Activated CD4-positive, alpha-beta memory T cell treated with anti-CD3 and anti-CD28 coated beads for 36 hours (primary cell): ENCODE measurements at regions of chr1 and their contacts with region 1.

Region 1: DNA sequence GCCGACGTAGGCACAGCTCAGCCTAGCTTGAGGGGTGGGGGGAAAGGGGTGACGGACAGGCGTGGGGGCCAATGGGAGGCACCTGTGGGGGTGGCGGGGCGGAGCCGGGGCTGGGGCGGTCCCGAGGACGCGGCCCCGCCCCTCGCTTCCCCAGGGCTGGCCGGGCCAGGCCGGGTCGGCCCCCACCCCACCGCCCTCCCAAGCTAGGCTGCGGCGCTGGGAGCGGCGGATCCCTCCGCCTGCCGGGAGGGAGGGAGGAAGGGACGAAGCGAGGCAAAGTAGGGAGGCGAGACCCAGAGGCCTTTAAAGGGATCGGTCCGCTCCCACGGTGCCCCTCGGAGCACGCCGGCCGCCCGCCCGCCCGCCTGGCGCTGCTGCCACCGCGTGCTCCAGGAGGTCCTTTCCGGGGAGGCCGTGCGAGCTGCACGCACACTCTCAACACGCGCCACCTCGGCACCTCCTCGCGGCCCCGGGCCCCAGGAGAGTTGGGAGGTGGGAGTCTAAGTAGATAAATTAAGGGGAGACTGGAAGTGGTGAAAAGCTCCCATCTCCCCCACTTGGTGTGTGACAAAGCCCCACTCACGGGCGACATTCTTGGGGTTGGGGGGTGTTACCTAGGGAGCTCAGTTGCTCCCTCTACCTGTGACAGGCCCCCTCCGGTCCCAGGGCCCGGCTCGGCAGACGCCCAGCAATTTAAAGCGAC is 373 bp upstream of the MEF2D start:
- DNase-seq: peak; percentile 95
- H3K4me3 Mint-ChIP-seq: peak overlapping the region; percentile 92
- H3K27ac Mint-ChIP-seq: peak overlapping the region; percentile 91
- H3K4me1 Mint-ChIP-seq: peaks cover 74% of the 10 kb centered on the region
- H3K27me3 Mint-ChIP-seq: no peaks in the 10 kb centered on the region

Region 2: DNA sequence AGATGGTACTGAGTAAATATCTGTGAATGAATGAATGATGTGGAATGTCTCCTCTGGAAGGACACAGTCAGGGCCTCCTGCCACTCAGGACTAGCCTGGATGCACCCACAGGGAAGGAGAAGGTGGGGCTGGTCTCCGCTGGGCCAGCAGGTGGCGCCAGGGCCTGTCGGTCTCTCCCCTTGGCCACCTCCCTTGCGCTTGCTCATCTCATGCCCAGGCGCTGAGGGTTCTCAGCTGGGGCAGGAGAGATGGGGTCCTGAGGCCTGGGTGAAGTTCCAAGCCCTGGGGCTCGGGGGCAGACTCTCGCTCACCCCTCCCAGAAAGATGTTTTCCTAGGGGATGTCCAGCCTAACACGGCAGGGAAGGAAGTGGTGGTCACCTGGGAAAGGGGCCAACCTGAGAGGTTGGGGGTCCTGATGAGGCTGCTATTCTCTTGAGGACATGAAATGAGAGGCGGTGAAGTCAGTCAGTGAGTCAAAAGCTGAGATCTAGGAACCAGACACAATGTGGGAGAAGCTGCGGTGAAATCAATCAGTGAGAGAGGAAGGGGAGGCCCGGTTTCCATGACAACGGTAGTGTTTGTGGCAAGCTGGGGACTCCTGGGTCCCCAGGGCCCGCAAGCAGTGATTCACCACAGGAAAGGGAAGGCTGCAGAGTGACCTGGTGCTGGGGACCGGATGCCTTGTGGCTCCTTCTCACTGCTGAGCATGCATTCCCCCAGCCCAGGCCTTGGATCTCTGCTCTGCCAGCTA is 404.1 kb before region 1 on chr1:
- CTCF ChIA-PET with region 1: no interaction called
- POLR2A ChIA-PET with region 1: no interaction called
- intact Hi-C with region 1: loop called (anchors 10 kb)
- DNase-seq: peak; percentile 97
- H3K4me3 Mint-ChIP-seq: peak overlapping the region; percentile 64
- H3K27ac Mint-ChIP-seq: peak overlapping the region; percentile 96
- H3K4me1 Mint-ChIP-seq: peaks cover 56% of the 10 kb centered on the region
- H3K27me3 Mint-ChIP-seq: peaks cover 11% of the 10 kb centered on the region

Region 3: DNA sequence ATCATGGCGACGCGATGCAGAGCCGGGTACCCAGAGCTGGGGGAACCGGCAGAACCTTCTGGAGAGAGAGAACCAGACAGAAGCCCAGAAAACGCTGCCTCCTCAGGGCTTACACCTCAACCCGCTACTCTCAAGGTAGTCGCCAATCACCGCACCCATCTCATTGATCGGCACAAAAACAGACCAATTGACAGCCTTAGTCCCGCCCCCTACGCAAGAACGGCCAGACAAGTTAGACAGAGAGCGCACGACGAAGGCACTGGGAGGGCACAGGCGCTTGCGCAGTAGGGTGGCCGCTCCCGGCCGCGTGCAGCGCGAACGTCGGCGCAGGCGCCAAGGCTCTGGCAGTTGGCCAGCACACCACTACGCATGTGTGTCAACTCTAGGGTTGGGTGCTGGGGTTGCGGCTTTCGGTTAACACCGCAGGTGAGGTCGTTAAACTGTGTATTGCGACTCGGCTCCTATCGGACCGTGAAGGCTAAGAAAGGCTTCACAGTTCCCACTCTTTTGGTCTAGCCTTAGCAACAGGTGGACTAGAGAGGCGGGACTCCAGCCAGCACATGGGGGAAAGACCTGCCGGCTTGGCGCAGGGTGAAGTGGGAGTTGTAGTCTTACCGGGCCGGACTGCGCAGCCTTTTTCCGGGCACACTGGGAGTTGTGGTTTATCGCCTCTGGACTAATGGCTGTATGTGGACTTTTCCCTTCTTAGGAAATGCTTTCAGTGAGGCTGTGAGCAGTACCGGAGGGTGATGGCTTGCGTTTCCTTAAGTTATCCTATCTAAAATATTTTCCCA is 162.6 kb before region 1 on chr1 and contains the starts of genes CCT3 and TSACC:
- CTCF ChIA-PET with region 1: no interaction called
- POLR2A ChIA-PET with region 1: no interaction called
- intact Hi-C with region 1: loop called (anchors 5 kb)
- DNase-seq: peak; percentile 99
- H3K4me3 Mint-ChIP-seq: peak within 1 kb of the TSS; percentile 90
- H3K27ac Mint-ChIP-seq: peak within 1 kb of the TSS; percentile 95
- H3K4me1 Mint-ChIP-seq: peaks cover 27% of the 10 kb centered on the region
- H3K27me3 Mint-ChIP-seq: no peaks in the 10 kb centered on the region
- total RNA-seq, gene CCT3: 344 to 356 TPM
- total RNA-seq, gene TSACC: not detected

Region 4: GRCh38 chr1:156480411-156481192 is 20.3 kb before region 1 on chr1:
- CTCF ChIA-PET with region 1: interaction called, 180 read pairs
- POLR2A ChIA-PET with region 1: interaction called, 23 read pairs
- intact Hi-C with region 1: loop called (anchors 1 kb)
- DNase-seq: peak; percentile 83
- H3K4me3 Mint-ChIP-seq: peak overlapping the region; percentile 39
- H3K27ac Mint-ChIP-seq: peak overlapping the region; percentile 79
- H3K4me1 Mint-ChIP-seq: peaks cover 66% of the 10 kb centered on the region
- H3K27me3 Mint-ChIP-seq: no peaks in the 10 kb centered on the region

Region 5: DNA sequence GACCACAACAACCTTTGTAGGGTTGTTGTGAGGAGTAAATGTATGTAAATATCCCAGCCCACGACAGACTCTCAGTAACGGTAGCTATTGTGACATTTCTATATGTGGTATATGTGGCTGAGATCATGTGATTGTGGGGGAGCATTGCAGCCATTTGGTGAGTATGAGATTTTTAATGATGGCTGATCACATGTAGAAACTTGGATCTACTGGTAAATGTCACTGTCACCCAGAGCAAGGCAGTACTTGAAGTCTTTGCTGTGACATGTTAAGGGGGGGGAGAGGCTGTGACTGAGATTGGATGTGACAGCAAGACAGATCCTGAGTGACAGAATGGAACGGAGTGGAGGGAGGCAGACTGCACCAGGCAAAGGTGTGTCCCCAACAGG is 23.5 kb after region 1 on chr1:
- CTCF ChIA-PET with region 1: interaction called, 6 read pairs
- POLR2A ChIA-PET with region 1: interaction called, 12 read pairs
- intact Hi-C with region 1: no loop called
- DNase-seq: peak; percentile 22
- H3K4me3 Mint-ChIP-seq: no peak overlapping the region
- H3K27ac Mint-ChIP-seq: no peak overlapping the region
- H3K4me1 Mint-ChIP-seq: peaks cover 27% of the 10 kb centered on the region
- H3K27me3 Mint-ChIP-seq: no peaks in the 10 kb centered on the region

Region 6: GRCh38 chr1:156591432-156592157 is 90.6 kb after region 1 on chr1 and contains the start of gene NAXE:
- CTCF ChIA-PET with region 1: interaction called, 5 read pairs
- POLR2A ChIA-PET with region 1: interaction called, 12 read pairs
- intact Hi-C with region 1: no loop called
- DNase-seq: peak; percentile 77
- H3K4me3 Mint-ChIP-seq: peak within 1 kb of the TSS; percentile 79
- H3K27ac Mint-ChIP-seq: peak within 1 kb of the TSS; percentile 85
- H3K4me1 Mint-ChIP-seq: peaks cover 19% of the 10 kb centered on the region
- H3K27me3 Mint-ChIP-seq: no peaks in the 10 kb centered on the region
- total RNA-seq, gene NAXE: 73.6 to 76.7 TPM

Region 7: DNA sequence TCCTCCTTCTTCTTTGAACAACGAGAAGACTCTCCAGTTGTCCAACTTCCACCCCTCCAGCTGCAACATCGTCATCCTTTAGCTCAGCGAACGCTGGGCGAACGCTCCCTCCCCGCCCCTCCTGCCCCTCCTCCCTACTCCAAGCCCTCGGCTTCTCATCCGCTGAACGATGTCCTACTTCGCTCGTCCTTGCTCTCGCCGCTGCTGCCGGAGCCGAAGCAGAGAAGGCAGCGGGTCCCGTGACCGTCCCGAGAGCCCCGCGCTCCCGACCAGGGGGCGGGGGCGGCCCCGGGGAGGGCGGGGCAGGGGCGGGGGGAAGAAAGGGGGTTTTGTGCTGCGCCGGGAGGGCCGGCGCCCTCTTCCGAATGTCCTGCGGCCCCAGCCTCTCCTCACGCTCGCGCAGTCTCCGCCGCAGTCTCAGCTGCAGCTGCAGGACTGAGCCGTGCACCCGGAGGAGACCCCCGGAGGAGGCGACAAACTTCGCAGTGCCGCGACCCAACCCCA is 140.9 kb after region 1 on chr1 and contains the start of gene BCAN:
- CTCF ChIA-PET with region 1: no interaction called
- POLR2A ChIA-PET with region 1: no interaction called
- intact Hi-C with region 1: no loop called
- DNase-seq: peak; percentile 34
- H3K4me3 Mint-ChIP-seq: no peak within 1 kb of the TSS
- H3K27ac Mint-ChIP-seq: no peak within 1 kb of the TSS
- H3K4me1 Mint-ChIP-seq: peaks cover 24% of the 10 kb centered on the region
- H3K27me3 Mint-ChIP-seq: peaks cover 75% of the 10 kb centered on the region
- total RNA-seq, gene BCAN: not detected

Region 8: DNA sequence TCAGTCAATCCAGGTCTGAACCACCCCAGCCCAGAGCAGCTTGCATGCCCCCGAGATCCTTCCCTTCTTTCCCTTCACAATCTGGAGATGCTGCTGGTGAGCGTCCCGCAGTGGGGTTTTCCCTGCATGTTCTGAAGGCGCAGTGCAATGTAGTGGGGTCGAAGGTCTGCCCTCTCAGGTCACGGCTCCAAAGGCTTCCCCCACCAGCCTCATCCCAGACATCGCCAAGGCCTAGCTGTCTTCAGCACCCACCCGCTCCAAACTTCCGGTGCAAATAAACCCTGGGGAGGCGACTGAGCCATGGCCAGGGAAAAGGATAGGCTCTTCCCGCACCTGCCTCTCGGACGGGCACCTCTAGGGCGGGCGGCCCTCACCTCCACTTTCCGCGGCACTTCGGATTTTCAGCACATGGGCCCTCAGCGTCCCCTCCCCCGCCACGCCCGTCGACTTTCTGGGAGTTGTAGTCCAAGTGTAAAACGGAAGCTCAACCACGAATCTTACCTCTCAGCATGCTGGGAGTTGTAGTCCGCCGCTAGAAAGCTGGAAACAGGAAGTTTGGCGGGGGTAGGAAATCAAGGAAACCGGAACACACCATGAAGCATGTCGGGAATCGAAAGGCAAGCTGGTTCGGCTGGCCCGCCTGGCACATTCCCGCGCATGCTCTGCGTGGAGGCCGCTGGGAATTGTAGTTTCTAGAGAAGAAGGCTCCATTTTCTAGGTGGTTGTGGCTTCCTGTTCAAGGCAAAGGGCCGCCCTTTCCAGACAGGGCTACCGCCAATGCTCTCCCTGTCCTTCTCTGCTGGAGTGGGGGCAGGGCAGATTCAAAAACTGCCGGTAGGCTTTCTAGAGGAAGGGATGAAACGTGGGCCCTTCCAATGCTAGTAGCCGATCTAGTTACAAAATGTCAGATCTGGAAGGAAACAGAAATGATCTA is 240.0 kb after region 1 on chr1 and contains the start of gene MRPL24:
- CTCF ChIA-PET with region 1: no interaction called
- POLR2A ChIA-PET with region 1: interaction called, 3 read pairs
- intact Hi-C with region 1: loop called (anchors 1 kb)
- DNase-seq: peak; percentile 98
- H3K4me3 Mint-ChIP-seq: peak within 1 kb of the TSS; percentile 89
- H3K27ac Mint-ChIP-seq: peak within 1 kb of the TSS; percentile 95
- H3K4me1 Mint-ChIP-seq: peaks cover 47% of the 10 kb centered on the region
- H3K27me3 Mint-ChIP-seq: no peaks in the 10 kb centered on the region
- total RNA-seq, gene MRPL24: 105 to 106 TPM